ENCODE measurements at regions of chr19 and their contacts with region 1.

Region 1: DNA sequence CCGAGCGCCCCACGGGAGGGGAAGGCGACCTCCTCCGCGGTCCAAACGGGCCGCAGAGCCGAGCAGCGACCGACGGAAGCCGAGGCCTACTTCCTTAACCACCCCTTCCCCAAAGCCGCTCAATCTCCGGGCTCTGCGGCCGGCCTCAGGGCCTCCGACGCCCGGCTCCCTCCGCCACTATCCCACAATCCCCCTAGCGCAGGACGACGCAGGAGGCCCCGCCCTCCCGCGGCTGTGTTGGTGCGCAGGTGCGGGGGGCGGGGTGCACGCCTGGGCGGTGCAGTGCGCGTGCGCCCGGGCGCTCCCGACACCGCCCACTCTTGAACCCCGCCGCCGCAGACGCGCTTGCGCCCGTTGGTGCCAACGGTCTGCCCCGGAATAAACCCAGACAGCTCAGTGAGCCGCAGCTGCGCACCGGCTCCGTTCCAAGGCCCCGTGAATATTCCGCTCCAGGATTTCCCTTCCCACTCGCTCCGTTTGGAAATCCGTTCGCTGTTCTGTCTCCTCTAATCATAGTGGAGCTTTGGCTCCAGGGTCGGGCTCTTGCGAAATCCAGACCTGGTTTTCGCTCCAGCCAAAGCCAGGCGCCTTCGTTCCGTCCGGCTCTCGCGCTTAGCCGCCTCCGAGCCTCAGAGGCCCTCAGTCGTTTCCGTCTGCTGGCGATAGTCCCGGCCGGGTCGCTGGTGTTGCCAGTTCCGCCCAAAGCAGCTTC is at the start of gene PPP6R1:
- DNase-seq: peak; percentile 96
- H3K4me3 Mint-ChIP-seq: peak within 1 kb of the TSS; percentile 93
- H3K27ac Mint-ChIP-seq: peak within 1 kb of the TSS; percentile 98
- H3K4me1 Mint-ChIP-seq: peaks cover 30% of the 10 kb centered on the region
- H3K27me3 Mint-ChIP-seq: no peaks in the 10 kb centered on the region
- total RNA-seq, gene PPP6R1: 180 to 200 TPM

Region 2: GRCh38 chr19:55216461-55217198 is 42.4 kb before region 1 on chr19:
- CTCF ChIA-PET with region 1: interaction called, 4 read pairs
- POLR2A ChIA-PET with region 1: interaction called, 4 read pairs
- intact Hi-C with region 1: loop called (anchors 2 kb)
- DNase-seq: peak; percentile 76
- H3K4me3 Mint-ChIP-seq: no peak overlapping the region
- H3K27ac Mint-ChIP-seq: no peak overlapping the region
- H3K4me1 Mint-ChIP-seq: peaks cover 11% of the 10 kb centered on the region
- H3K27me3 Mint-ChIP-seq: peaks cover 20% of the 10 kb centered on the region

Region 3: DNA sequence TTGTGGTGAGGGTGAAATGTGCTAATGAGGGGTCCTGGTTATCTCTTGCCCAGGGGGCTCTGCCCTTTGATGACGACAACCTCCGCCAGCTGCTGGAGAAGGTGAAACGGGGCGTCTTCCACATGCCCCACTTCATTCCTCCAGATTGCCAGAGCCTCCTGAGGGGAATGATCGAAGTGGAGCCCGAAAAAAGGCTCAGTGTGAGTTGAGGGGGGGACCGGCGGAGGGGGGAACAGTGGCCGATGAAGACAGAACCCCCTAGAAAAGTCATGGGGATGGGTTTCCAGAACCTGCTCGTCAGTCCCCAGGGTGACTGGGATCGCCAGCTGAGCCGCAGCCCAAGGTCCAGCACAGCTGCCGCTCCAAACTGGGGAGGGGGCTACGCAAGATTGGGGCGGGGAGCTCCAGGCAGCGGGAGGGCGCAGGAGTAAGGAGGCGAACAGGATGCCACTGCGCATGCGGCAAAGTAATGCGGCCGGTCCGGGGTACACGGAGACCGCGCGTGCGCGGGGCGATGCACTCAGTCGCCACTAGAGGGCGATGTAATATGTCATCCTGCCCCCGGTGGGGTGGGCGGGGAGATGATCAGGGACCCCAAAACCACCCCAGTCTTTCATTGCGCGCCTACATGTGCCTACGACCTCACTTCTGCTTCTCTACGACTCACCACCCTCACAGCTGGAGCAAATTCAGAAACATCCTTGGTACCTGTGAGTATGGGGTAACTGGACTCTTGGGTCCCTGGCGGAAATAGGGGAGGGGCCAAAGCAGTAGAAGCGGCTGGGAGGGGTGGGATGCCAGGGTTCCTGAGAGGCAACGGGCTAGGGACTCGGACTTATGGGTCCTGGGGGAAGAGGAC is 42.7 kb after region 1 on chr19:
- CTCF ChIA-PET with region 1: interaction called, 14 read pairs
- POLR2A ChIA-PET with region 1: interaction called, 3 read pairs
- intact Hi-C with region 1: no loop called
- DNase-seq: peak; percentile 95
- H3K4me3 Mint-ChIP-seq: peak overlapping the region; percentile 72
- H3K27ac Mint-ChIP-seq: peak overlapping the region; percentile 56
- H3K4me1 Mint-ChIP-seq: no peaks in the 10 kb centered on the region
- H3K27me3 Mint-ChIP-seq: no peaks in the 10 kb centered on the region

Region 4: DNA sequence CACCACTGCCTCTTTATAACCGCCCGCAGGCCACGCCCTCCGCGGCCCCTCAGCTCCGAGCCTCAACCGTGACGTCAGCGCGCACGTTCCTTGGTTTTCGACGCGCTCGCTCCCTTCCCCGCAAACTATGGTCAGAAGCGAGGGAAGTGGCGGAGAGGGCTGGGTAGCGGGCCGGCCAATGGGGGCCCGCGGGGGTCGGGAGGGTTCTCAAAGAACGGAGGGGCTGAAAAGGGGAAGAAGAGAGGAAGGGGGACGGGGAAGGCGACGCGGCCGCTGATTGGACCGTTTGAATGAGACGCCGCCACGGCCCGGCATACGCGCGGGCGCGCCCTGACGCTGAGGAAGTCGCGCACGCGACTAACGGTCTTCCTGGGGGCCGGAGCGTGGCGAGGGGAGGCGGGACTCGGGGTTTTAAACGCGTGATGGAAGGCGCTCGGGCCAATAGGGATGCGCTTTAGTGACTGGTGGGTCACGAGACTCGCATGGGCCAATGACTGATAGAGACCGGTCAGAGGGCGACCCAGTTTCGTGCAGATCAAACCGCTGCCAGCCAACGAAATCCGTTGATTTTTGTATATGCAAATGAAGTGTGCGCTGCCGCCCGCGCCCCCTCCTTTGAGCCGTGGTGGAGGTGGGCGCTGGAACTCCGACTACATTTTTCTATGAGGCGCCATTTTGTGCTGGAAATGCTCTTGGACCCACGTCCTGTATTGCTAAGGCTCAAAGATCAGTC is 149.0 kb after region 1 on chr19:
- CTCF ChIA-PET with region 1: no interaction called
- POLR2A ChIA-PET with region 1: interaction called, 10 read pairs
- intact Hi-C with region 1: loop called (anchors 1 kb)
- DNase-seq: peak; percentile 98
- H3K4me3 Mint-ChIP-seq: peak overlapping the region; percentile 90
- H3K27ac Mint-ChIP-seq: peak overlapping the region; percentile 97
- H3K4me1 Mint-ChIP-seq: peaks cover 26% of the 10 kb centered on the region
- H3K27me3 Mint-ChIP-seq: no peaks in the 10 kb centered on the region

Region 5: DNA sequence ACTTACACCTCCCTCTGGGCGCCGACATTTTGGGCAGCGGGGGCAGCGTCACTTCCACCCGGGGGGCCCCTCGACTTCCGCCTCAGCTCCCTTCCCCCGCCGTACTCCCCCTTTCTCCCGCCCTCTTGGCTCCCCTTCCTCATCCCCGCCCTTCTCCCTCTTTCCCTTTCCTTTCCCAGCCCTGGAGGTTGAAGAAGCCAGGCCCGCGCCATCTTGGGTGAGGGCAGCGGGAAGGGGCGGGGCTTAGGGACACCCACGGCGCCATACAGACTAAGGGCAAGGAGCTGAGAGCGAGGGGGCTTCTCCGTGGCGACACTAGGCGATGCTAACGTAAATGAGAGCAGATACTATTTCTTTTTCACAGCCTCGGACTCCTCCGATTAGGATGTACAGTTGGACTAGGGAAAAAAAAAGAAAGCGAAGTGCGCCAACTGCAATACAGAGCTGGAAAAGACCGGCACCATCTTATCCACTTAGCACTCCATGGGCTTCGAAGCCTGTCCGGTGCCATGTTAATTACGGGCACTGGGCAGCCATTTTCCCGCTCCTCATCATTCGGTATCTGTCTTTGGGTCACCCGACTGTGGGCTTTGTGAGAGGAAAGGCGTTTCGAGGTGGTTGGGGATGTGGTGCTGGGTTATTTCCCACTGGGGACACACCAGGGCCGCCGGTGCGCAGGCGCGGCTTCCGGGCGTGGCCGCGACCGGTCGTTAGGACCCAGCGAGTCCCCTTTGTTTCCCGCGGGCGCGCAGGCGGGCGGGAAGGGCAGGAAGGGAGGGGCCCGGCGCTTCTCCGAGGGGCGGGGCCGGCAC is 340.7 kb after region 1 on chr19 and contains the start of gene FIZ1:
- CTCF ChIA-PET with region 1: no interaction called
- POLR2A ChIA-PET with region 1: no interaction called
- intact Hi-C with region 1: loop called (anchors 1 kb)
- DNase-seq: peak; percentile 98
- H3K4me3 Mint-ChIP-seq: peak within 1 kb of the TSS; percentile 91
- H3K27ac Mint-ChIP-seq: peak within 1 kb of the TSS; percentile 95
- H3K4me1 Mint-ChIP-seq: peaks cover 25% of the 10 kb centered on the region
- H3K27me3 Mint-ChIP-seq: no peaks in the 10 kb centered on the region
- total RNA-seq, gene FIZ1: 13.8 to 13.9 TPM

Measured in activated CD4-positive, alpha-beta memory T cell treated with anti-CD3 and anti-CD28 coated beads for 36 hours (primary cell).